Activated CD4-positive, alpha-beta memory T cell treated with anti-CD3 and anti-CD28 coated beads, Interleukin-2, amount 10 ng/mL, durations not matched to agents 7 days and 5 days (primary cell): ENCODE measurements at regions of chrX and their contacts with region 1.

Region 1: DNA sequence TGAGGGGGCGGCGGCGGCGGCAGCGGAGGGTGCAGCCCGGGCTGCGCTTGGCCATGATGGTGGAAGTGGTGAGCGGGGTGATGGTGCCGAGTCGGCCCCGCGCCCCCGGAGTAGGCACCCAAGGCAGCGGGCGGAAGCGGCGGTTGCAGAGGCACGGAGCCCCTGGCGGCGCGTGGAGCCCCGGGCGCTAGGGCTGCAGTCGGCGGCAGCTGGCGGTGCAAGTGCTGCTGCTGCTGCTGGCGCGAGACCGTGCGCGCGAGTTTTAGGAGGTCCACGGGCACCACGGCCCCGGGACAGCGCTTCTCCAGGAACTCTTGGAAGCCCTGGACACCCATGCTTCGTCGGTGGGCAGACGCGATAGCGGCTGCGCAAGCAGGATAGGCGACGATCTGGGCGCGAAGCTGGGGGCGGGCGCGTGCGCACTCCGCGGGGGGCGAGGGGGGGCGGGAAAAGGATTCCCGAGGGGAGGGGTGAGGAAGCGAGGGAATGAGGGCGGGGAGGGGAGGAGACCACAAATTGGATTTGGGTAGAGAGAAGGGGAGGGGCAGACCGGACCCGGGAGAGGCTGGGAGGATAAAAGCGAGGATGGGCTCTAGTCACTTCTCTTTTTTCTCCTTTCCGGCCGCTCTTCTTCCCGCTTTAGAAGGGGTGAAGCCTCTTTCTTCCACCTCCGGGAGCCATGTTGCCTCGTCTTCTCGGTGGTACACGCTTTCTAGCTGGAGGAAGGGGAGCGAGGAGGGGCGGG is at the start of gene FAM120C:
- DNase-seq: peak; percentile 63
- H3K4me3 Mint-ChIP-seq: peak within 1 kb of the TSS; percentile 78
- H3K27ac Mint-ChIP-seq: peak within 1 kb of the TSS; percentile 81
- H3K4me1 Mint-ChIP-seq: peaks cover 41% of the 10 kb centered on the region
- H3K27me3 Mint-ChIP-seq: no peaks in the 10 kb centered on the region
- total RNA-seq, gene FAM120C: 8.0 to 8.5 TPM

Region 2: GRCh38 chrX:53990171-53990570 is 192.9 kb before region 1 on chrX:
- CTCF ChIA-PET with region 1: no interaction called
- POLR2A ChIA-PET with region 1: no interaction called
- DNase-seq: no peak
- H3K4me3 Mint-ChIP-seq: no peak overlapping the region
- H3K27ac Mint-ChIP-seq: no peak overlapping the region
- H3K4me1 Mint-ChIP-seq: peaks cover 8% of the 10 kb centered on the region
- H3K27me3 Mint-ChIP-seq: no peaks in the 10 kb centered on the region

Region 3: DNA sequence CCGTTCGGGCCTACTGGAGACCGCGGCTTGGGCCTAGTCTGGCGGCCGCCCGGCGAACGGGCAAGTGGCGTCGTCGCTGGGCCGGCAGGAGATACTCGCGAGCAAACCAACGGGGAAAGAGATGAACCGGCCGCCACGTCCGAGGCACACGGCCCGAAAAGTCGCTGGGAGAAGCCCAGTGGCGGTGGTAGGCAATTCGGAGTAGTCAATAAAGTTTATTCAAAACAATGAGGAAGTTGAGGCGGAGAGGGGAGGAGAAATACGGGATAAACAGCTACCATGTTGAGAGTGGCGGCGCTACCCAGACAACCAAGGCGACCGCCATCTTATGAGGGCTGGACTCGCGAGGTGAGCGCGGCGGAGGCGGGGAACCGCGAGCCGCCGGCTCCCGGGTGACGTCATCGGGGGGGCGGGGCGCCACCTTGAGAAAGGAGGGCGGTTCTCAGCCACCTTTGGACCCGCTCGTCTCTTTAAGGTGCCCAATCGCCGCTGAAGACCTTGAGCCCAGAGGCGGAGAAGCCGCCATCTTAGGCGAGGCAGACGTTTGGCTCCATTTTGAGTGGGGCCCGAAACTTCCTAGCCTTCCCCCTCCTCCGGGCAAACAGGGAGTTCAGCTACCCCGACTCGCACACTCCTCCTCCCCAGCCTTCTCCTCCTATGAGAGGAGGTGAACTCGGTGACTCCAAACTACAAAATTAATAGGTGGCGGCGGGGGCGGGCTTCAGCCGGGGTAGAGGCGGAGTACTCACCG is 138.7 kb before region 1 on chrX and contains the start of gene PHF8:
- CTCF ChIA-PET with region 1: no interaction called
- POLR2A ChIA-PET with region 1: interaction called, 34 read pairs
- DNase-seq: peak; percentile 95
- H3K4me3 Mint-ChIP-seq: peak within 1 kb of the TSS; percentile 96
- H3K27ac Mint-ChIP-seq: peak within 1 kb of the TSS; percentile 96
- H3K4me1 Mint-ChIP-seq: peaks cover 35% of the 10 kb centered on the region
- H3K27me3 Mint-ChIP-seq: no peaks in the 10 kb centered on the region
- total RNA-seq, gene PHF8: 40.4 to 42.5 TPM

Region 4: GRCh38 chrX:54171527-54172250 is 11.3 kb before region 1 on chrX:
- CTCF ChIA-PET with region 1: no interaction called
- POLR2A ChIA-PET with region 1: interaction called, 17 read pairs
- DNase-seq: no peak
- H3K4me3 Mint-ChIP-seq: no peak overlapping the region
- H3K27ac Mint-ChIP-seq: no peak overlapping the region
- H3K4me1 Mint-ChIP-seq: peaks cover 1% of the 10 kb centered on the region
- H3K27me3 Mint-ChIP-seq: no peaks in the 10 kb centered on the region